ENCODE measurements at regions of chr11 and their contacts with region 1.

Region 1: DNA sequence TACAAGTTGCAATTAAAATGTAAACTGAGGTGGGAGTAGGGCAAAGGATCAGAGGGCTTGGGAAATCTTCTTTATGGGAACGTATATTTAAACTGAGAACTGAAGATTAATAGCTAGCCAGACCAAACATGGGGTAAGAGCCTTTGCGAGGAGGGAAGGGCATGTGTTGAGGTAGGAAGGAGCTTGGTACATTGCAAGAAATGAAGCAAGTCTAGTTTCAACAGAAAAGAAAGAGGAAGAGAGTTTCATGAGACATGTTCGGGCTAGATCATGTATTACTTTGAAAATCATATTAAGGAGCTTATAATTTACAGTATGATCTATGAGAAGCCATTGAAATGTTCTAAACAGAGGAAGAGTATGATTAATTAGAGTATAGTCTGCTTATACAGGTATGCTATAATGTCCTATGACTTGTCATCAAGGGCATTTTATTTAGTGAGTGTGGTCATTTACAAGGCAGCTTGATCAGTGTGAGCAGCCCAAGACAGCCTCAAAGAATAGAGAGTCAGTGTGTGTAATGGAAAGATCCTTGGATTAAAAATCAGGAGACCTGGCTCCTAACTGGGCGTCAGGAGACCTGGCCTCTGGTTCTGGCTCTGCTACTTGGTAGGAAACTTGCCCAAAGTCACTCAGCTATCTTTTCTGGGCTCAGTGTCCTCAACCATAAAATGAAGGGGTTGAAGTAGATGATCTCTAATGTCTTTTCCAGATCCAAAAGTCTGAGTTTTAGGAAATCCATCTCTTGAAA is 10.9 kb downstream of the GAS2 start:
- DNase-seq: no peak
- ATAC-seq: peak; percentile 55
- H3K4me3 ChIP-seq: no peak overlapping the region
- H3K27ac ChIP-seq: no peak overlapping the region; the same call in 1 of the 2 replicates
- H3K4me1 ChIP-seq: no peaks in the 10 kb centered on the region
- H3K27me3 ChIP-seq: no peaks in the 10 kb centered on the region
- CTCF ChIP-seq: no peak
- EP300 ChIP-seq: no peak
- POLR2A ChIP-seq: no peak
- RAD21 ChIP-seq: no peak

Region 2: DNA sequence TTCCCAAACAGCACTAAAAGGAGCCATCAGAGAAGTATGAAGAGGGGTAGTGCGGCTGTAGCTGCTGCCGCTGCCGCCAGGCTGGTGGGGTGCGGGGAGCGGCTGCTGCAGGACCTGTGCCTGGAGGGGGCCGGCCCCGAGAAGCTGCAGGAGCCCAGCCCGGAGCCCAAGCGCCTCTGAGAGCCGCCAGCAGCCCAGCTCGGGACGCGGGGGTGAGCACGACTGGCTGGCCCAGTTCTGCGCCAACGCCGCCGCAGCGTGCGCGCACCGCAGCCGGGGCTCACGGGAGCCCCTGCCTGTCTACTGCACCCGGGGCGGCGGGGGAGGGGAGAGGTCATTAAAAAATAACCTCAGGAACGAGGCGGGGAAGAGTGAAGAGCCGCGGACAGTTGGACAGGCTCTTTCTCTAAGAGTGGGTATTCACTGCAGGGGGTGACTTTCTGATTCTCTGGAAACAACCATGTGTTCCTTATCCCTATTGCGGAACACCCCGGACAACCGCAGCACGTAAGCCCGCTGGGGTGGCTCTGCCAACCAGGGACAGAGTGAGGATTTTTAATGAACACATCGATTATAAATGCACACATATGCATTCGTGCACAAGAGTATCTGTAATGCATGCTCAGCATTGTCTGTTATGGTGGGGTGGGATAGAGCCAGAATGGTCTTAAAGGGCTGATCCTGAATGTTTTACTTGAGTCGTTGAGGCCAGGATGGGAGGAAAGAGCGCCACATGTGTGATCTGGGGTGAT is 10.5 kb before region 1 on chr11:
- CTCF ChIA-PET with region 1: interaction called, 8 read pairs
- POLR2A ChIA-PET with region 1: interaction called, 19 read pairs
- RAD21 ChIA-PET with region 1: interaction called, 46 read pairs
- SMC1A ChIA-PET with region 1: interaction called, 30 read pairs
- in situ Hi-C with region 1: no loop called
- intact Hi-C with region 1: no loop called
- DNase-seq: no peak
- ATAC-seq: peak; percentile 72
- H3K4me3 ChIP-seq: peak overlapping the region; percentile 59
- H3K27ac ChIP-seq: peak overlapping the region; percentile 77
- H3K4me1 ChIP-seq: no peaks in the 10 kb centered on the region
- H3K27me3 ChIP-seq: no peaks in the 10 kb centered on the region
- CTCF ChIP-seq: peak in 1 of 3 experiments; percentile 5; a peak in 1 of 6 replicates
- EP300 ChIP-seq: no peak
- POLR2A ChIP-seq: peak; percentile 65; the same call in 1 of the 2 replicates
- RAD21 ChIP-seq: no peak

Region 3: DNA sequence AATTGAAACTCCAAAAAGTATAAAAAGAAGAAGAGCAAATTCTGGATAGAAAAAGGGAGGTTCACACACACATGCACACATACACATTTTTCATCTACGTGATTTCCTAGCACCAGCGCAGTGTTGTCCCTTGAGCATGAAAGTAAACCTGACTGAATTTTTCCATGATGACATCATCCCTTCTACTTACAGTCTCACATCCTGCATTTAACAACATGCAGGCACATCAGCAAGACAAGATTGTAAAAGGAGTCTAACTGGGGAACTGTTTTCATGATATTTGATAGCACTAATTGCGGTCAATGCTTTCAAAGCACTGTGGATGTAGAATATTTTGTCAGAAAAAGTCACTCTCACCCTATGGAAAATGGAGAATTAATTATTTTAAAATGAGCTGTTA is 25.7 kb after region 1 on chr11:
- CTCF ChIA-PET with region 1: interaction called, 11 read pairs
- POLR2A ChIA-PET with region 1: interaction called, 16 read pairs
- RAD21 ChIA-PET with region 1: interaction called, 111 read pairs
- SMC1A ChIA-PET with region 1: interaction called, 117 read pairs
- in situ Hi-C with region 1: no loop called
- intact Hi-C with region 1: no loop called
- DNase-seq: peak; percentile 21
- ATAC-seq: peak; percentile 76
- H3K4me3 ChIP-seq: no peak overlapping the region
- H3K27ac ChIP-seq: no peak overlapping the region
- H3K4me1 ChIP-seq: no peaks in the 10 kb centered on the region
- H3K27me3 ChIP-seq: no peaks in the 10 kb centered on the region
- CTCF ChIP-seq: no peak
- EP300 ChIP-seq: peak in 1 of 2 experiments; percentile 43; a peak in 1 of 4 replicates
- POLR2A ChIP-seq: no peak
- RAD21 ChIP-seq: no peak

Region 4: DNA sequence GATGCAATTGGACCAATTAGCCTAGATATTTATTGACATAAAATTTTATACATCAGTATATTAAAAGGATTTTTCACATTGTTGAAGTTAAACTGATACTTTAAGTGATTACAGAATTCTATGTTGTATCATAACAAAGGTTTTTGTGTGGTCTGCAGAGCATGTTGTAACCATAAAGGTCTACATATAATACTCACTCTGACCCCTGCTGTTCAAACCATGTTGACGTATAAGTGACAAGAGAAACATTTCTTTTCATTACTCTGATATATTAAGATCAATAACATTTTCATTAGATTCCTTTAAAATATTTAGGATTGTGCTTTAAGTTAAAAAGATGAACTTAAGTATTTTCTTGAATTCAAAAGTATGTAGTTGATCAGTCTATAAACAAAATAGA is 53.0 kb after region 1 on chr11:
- CTCF ChIA-PET with region 1: interaction called, 94 read pairs
- POLR2A ChIA-PET with region 1: interaction called, 5 read pairs
- RAD21 ChIA-PET with region 1: interaction called, 110 read pairs
- SMC1A ChIA-PET with region 1: interaction called, 106 read pairs
- in situ Hi-C with region 1: no loop called
- intact Hi-C with region 1: no loop called
- DNase-seq: no peak
- ATAC-seq: peak; percentile 88
- H3K4me3 ChIP-seq: no peak overlapping the region
- H3K27ac ChIP-seq: no peak overlapping the region
- H3K4me1 ChIP-seq: no peaks in the 10 kb centered on the region
- H3K27me3 ChIP-seq: no peaks in the 10 kb centered on the region
- CTCF ChIP-seq: peak; percentile 4 to 53 (median 9); a peak in 2 of 6 replicates
- EP300 ChIP-seq: no peak
- POLR2A ChIP-seq: no peak
- RAD21 ChIP-seq: peak; percentile 58

Region 5: DNA sequence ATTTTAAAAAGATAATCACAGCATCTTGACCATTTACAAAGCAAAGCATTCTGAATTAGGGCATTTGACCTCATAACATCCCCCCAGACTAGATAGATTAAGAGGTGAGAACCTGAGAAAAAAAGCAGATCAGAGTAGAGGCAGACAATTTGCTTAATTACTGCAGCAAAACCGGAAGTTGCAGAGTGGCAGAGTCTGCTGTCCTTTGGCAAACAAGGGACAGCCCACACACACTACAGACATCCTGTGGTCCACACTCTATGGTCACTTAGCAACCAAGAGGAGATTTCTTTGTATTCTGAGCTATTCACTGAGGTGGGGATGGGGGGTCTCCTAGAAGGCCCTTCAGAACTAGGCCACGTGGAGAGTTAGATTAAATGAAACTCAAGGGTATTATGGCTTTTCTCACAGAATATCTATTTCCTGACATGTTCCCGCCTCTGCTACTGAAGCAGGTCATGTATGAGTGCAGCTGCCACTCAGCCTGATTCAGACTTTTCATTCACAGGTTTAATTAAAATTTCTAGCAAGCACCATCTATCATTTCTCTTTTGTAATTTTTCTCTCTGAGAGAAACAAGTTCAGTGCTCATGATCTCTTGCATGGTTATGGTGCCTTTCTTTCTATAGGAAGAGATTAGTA is 103.7 kb after region 1 on chr11:
- CTCF ChIA-PET with region 1: interaction called, 135 read pairs
- POLR2A ChIA-PET with region 1: interaction called, 15 read pairs
- RAD21 ChIA-PET with region 1: interaction called, 103 read pairs
- SMC1A ChIA-PET with region 1: interaction called, 251 read pairs
- in situ Hi-C with region 1: loop called (anchors 10 kb)
- intact Hi-C with region 1: no loop called
- DNase-seq: no peak
- ATAC-seq: peak; percentile 81
- H3K4me3 ChIP-seq: no peak overlapping the region
- H3K27ac ChIP-seq: no peak overlapping the region
- H3K4me1 ChIP-seq: peaks cover 11% of the 10 kb centered on the region
- H3K27me3 ChIP-seq: no peaks in the 10 kb centered on the region
- CTCF ChIP-seq: no peak
- EP300 ChIP-seq: 0 out of 4 replicates have a peak, but pooled peaks of 1 of the 2 experiments have one; percentile 40
- POLR2A ChIP-seq: no peak
- RAD21 ChIP-seq: no peak

Region 6: DNA sequence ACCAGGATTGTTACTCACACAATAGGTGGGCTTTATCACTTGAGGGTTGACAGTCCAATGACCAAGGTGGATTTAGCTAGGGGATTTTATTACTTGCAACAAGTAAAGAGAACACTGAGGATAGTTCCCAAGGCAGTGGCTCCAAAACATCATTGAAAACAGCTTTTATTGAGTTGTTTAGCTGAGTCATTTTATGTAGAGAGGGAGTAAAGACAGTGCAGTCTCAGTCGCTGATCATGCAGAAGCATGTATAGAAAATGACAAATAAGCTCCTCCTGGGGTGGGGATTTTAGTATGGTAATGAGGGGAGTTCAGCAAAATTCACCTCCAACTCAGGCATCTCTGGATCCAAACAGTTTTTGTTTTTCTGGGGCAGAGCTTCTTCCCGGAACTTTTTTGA is 346.0 kb after region 1 on chr11:
- CTCF ChIA-PET with region 1: no interaction called
- POLR2A ChIA-PET with region 1: no interaction called
- RAD21 ChIA-PET with region 1: no interaction called
- SMC1A ChIA-PET with region 1: no interaction called
- in situ Hi-C with region 1: no loop called
- intact Hi-C with region 1: no loop called
- DNase-seq: no peak
- ATAC-seq: peak; percentile 56
- H3K4me3 ChIP-seq: no peak overlapping the region
- H3K27ac ChIP-seq: no peak overlapping the region
- H3K4me1 ChIP-seq: no peaks in the 10 kb centered on the region
- H3K27me3 ChIP-seq: no peaks in the 10 kb centered on the region
- CTCF ChIP-seq: no peak
- EP300 ChIP-seq: no peak
- POLR2A ChIP-seq: no peak
- RAD21 ChIP-seq: no peak

Measured in GM12878 (cell line).